Mammary epithelial cell (primary cell): ENCODE measurements at regions of chrX and their contacts with region 1.

Region 1: DNA sequence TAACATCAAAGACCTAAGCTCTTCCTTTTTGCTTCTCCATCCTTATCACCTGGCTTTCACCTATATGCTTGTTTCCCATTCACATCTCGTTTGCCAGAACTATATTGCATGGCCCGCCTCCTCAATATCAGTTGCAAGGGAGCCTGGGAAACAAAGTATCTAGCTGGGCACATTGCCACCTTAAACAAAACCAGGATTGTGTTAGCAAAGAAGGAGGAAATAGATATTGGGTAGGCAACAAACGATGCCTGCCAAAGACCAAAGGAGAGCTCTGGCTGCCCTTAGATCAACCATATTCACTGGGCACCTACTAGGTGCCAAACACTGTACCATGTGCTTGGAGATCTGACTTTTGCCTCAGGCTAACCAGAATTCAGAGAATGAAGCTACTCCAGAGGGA is 107.5 kb downstream of the GRIA3 start:
- DNase-seq: no peak
- H3K4me3 ChIP-seq: no peak overlapping the region
- H3K27ac ChIP-seq: no peak overlapping the region
- H3K4me1 ChIP-seq: no peaks in the 10 kb centered on the region
- H3K27me3 ChIP-seq: no peaks in the 10 kb centered on the region
- CTCF ChIP-seq: no peak

Region 2: DNA sequence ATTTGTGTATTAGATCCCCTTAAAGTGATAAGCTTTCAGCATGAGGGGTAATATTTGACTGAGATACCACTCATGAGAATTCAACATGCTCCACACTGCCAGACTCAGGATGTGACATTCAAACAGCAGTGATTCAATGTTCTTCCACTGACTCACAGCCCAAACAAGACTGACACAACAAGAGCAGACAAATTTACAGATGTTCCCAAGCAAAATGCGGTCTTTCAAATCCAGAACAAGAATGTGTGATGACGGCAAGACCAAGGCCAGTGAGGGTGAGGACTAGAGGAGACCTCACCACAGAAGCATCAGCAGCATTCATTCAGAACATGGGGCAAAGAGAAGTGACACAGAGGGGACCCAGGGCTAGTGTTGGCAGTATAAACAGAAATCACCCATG is 206.8 kb before region 1 on chrX:
- CTCF ChIA-PET with region 1: no interaction called
- dilution Hi-C with region 1: no loop called
- in situ Hi-C with region 1: no loop called
- intact Hi-C with region 1: no loop called
- DNase-seq: peak; percentile 83
- H3K4me3 ChIP-seq: no peak overlapping the region
- H3K27ac ChIP-seq: peak overlapping the region; percentile 76
- H3K4me1 ChIP-seq: peaks cover 26% of the 10 kb centered on the region
- H3K27me3 ChIP-seq: no peaks in the 10 kb centered on the region
- CTCF ChIP-seq: no peak

Region 3: DNA sequence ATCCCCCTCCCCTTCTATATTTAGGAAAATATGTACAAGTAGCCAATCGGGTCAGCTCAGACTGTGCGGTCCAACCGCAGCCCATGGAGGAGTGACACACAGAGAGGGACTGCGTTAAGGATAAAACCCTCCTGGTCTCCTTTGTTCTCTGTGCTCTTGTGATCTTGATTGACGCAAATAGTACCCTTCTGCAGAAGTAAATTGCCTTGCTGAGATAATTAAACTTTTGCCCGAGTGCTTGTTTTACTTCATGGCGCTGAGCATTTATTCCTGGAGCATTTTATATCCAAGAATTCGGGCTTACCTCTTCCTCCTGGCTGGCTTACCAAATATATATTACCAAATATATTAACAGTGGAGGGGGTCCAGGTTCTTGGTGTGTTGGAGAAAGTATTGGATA is 854.1 kb after region 1 on chrX:
- CTCF ChIA-PET with region 1: no interaction called
- dilution Hi-C with region 1: no loop called
- in situ Hi-C with region 1: no loop called
- intact Hi-C with region 1: loop called (anchors 10 kb)
- DNase-seq: no peak
- H3K4me3 ChIP-seq: no peak overlapping the region
- H3K27ac ChIP-seq: no peak overlapping the region
- H3K4me1 ChIP-seq: no peaks in the 10 kb centered on the region
- H3K27me3 ChIP-seq: no peaks in the 10 kb centered on the region
- CTCF ChIP-seq: no peak